ENCODE measurements at regions of chr12 and their contacts with region 1.

Region 1: DNA sequence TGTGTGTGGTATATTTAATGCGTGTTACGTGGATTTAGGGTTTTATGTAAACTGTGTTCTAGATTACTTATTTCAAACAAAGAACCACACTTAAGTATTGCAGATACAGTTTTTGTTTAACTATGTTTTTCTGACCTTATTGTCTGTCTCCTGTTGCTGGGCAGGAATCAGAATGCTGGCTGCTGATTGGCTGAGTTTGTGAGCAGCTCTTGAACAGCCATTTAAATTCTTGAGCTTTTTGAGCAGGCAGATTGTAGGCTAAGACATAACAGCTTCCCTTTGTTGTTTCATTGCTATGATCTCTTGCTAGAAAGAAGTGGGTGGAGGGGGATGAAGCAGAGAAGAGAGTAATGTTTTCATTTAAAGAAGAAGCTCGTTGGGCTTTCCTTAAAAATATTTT is 52.2 kb downstream of the ATF7IP start:
- DNase-seq: peak; percentile 34 to 91 (median 62)
- ATAC-seq: peak; percentile 65
- H3K4me3 ChIP-seq: peak overlapping the region; percentile 33
- H3K4me3 Mint-ChIP-seq: peak overlapping the region; percentile 82
- H3K27ac ChIP-seq: peak overlapping the region; percentile 5 to 52
- H3K27ac Mint-ChIP-seq: peak overlapping the region; percentile 75
- H3K4me1 ChIP-seq: peaks cover 16% of the 10 kb centered on the region
- H3K4me1 Mint-ChIP-seq: peaks cover 62% of the 10 kb centered on the region
- H3K27me3 ChIP-seq: no peaks in the 10 kb centered on the region
- H3K27me3 Mint-ChIP-seq: no peaks in the 10 kb centered on the region
- CTCF ChIP-seq: no peak

Region 2: GRCh38 chr12:14239350-14239934 is 178.3 kb before region 1 on chr12:
- CTCF ChIA-PET with region 1: interaction called, 5 read pairs
- POLR2A ChIA-PET with region 1: interaction called, 11 read pairs
- intact Hi-C with region 1: loop called (anchors 1 to 2 kb)
- DNase-seq: peak in 5 of 14 experiments; percentile 8 to 66 (median 54)
- ATAC-seq: peak; percentile 62
- H3K4me3 ChIP-seq: peak overlapping the region; percentile 49
- H3K4me3 Mint-ChIP-seq: peak overlapping the region; percentile 88
- H3K27ac ChIP-seq: peak overlapping the region in 1 of 2 donors; percentile 18
- H3K27ac Mint-ChIP-seq: peak overlapping the region; percentile 87
- H3K4me1 ChIP-seq: peaks cover 19% of the 10 kb centered on the region
- H3K4me1 Mint-ChIP-seq: peaks cover 20% of the 10 kb centered on the region
- H3K27me3 ChIP-seq: no peaks in the 10 kb centered on the region
- H3K27me3 Mint-ChIP-seq: no peaks in the 10 kb centered on the region
- CTCF ChIP-seq: no peak

Region 3: GRCh38 chr12:14257734-14258574 is 159.8 kb before region 1 on chr12:
- CTCF ChIA-PET with region 1: interaction called, 3 read pairs
- POLR2A ChIA-PET with region 1: interaction called, 18 read pairs
- intact Hi-C with region 1: loop called (anchors 1 to 5 kb)
- DNase-seq: peak; percentile 57 to 95 (median 68)
- ATAC-seq: peak; percentile 54
- H3K4me3 ChIP-seq: peak overlapping the region; percentile 21
- H3K4me3 Mint-ChIP-seq: peak overlapping the region; percentile 83
- H3K27ac ChIP-seq: peak overlapping the region; percentile 68 to 84
- H3K27ac Mint-ChIP-seq: peak overlapping the region; percentile 98
- H3K4me1 ChIP-seq: peaks cover 43% of the 10 kb centered on the region
- H3K4me1 Mint-ChIP-seq: peaks cover 55% of the 10 kb centered on the region
- H3K27me3 ChIP-seq: no peaks in the 10 kb centered on the region
- H3K27me3 Mint-ChIP-seq: no peaks in the 10 kb centered on the region
- CTCF ChIP-seq: no peak

Region 4: GRCh38 chr12:14394317-14395073 is 23.2 kb before region 1 on chr12:
- CTCF ChIA-PET with region 1: interaction called, 13 read pairs
- POLR2A ChIA-PET with region 1: interaction called, 15 read pairs
- intact Hi-C with region 1: loop called in 1 of 2 experiments (anchors 2 kb)
- DNase-seq: peak in 7 of 14 experiments; percentile 15 to 86 (median 36)
- ATAC-seq: peak; percentile 70
- H3K4me3 ChIP-seq: peak overlapping the region; percentile 10
- H3K4me3 Mint-ChIP-seq: peak overlapping the region; percentile 83
- H3K27ac ChIP-seq: peak overlapping the region; percentile 58 to 66
- H3K27ac Mint-ChIP-seq: peak overlapping the region; percentile 91
- H3K4me1 ChIP-seq: peaks cover 25% of the 10 kb centered on the region
- H3K4me1 Mint-ChIP-seq: peaks cover 90% of the 10 kb centered on the region
- H3K27me3 ChIP-seq: no peaks in the 10 kb centered on the region
- H3K27me3 Mint-ChIP-seq: no peaks in the 10 kb centered on the region
- CTCF ChIP-seq: no peak

Region 5: DNA sequence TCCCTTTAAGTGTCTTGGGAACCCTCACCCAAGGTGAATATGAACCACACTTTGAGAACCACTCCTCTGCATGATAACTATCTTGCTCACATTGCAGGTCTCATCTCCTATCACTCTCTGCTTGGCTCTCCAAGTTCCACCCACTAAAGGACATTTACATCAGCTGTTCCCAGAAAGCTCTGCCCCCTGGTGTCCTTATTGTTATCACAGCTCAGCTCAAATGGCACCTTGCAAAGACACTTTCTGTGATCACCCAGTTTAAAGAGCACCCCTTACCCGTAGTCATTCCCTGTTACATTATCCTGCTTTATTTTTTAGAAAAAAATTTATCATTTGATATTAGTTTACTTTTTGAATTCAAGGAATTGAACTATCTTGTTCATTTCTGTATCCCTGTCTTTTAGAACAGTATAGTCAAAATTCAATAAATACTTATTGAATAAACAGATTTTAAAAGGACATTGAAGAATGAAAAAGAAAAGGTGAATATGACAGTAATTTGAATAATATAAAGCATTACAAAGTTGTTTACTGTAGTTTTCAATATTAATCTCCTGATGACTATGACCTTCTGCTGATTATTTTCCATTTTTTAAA is 299.2 kb after region 1 on chr12:
- CTCF ChIA-PET with region 1: no interaction called
- POLR2A ChIA-PET with region 1: no interaction called
- intact Hi-C with region 1: loop called in 1 of 2 experiments (anchors 5 kb)
- DNase-seq: peak in 13 of 14 experiments; percentile 7 to 76 (median 27)
- ATAC-seq: peak; percentile 74
- H3K4me3 ChIP-seq: no peak overlapping the region
- H3K4me3 Mint-ChIP-seq: no peak overlapping the region
- H3K27ac ChIP-seq: no peak overlapping the region
- H3K27ac Mint-ChIP-seq: no peak overlapping the region
- H3K4me1 ChIP-seq: no peaks in the 10 kb centered on the region
- H3K4me1 Mint-ChIP-seq: no peaks in the 10 kb centered on the region
- H3K27me3 ChIP-seq: no peaks in the 10 kb centered on the region
- H3K27me3 Mint-ChIP-seq: no peaks in the 10 kb centered on the region
- CTCF ChIP-seq: peak; percentile 64